PC-9 (cell line): ENCODE measurements at regions of chr17 and their contacts with region 1.

Region 1: DNA sequence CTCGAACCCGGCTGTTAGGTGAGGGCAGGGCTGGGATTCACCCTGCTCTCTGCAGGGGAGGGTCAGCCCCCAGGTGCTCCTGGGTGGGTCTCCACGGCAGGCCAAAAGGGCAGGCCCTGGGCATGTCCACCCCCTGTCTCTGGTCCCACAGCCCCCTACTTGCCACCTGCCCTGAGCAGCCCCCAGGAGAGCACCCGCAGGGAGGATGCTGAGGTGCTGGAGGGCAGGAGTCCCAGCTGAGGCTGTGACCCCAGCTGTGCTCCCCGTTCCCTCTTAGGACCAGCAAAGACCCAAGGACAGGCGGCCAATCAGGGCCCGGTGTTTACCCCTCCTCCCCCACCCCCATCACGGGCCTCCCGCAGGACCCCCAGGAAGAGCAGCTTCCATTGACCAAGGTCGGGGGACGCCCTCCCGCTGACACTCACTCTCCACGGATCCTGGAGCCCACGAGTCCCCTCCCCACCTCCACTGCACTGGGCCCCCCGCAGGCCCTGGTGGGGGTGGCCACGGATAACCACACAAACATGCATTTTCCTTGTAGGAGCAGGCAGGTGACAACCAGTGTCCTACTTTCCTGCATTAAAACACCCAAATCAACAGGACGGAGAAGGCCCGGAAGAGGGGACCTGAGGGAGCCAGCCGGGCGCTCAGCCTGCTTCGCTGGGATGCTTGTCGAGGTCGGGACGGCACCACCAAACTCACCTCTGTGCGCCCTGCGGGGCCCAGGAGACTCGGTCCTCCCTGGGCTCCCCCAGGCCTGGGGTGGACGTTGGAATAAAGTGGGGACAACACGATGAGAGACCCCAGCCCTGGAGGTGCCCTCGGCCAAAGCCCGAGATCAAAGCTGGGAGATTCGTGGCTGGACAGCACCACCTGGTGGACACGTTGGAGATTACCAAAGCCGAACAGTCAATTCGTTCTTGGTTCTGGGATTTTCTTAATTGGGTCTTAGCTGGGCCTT is 22.5 kb upstream of the ENPP7 start:
- DNase-seq: peak in 1 of 2 experiments; percentile 46
- H3K4me3 ChIP-seq: no peak overlapping the region
- H3K27ac ChIP-seq: no peak overlapping the region
- H3K4me1 ChIP-seq: no peaks in the 10 kb centered on the region
- H3K27me3 ChIP-seq: 0 out of 2 replicates have a peak, but pooled peaks cover 9% of the 10 kb centered on the region
- CTCF ChIP-seq: peak; percentile 80

Region 2: GRCh38 chr17:79074650-79075445 is 633.4 kb before region 1 on chr17 and contains the start of gene ENGASE:
- CTCF ChIA-PET with region 1: interaction called, 11 read pairs
- POLR2A ChIA-PET with region 1: no interaction called
- intact Hi-C with region 1: no loop called
- DNase-seq: peak; percentile 77 to 95
- H3K4me3 ChIP-seq: peak within 1 kb of the TSS; percentile 69
- H3K27ac ChIP-seq: no peak within 1 kb of the TSS
- H3K4me1 ChIP-seq: peaks cover 17% of the 10 kb centered on the region
- H3K27me3 ChIP-seq: no peaks in the 10 kb centered on the region
- CTCF ChIP-seq: no peak
- total RNA-seq, gene ENGASE: 15.7 and 19.5 TPM in 2 replicates

Region 3: GRCh38 chr17:79188048-79188447 is 520.2 kb before region 1 on chr17:
- CTCF ChIA-PET with region 1: no interaction called
- POLR2A ChIA-PET with region 1: no interaction called
- intact Hi-C with region 1: loop called (anchors 5 kb)
- DNase-seq: peak in 1 of 2 experiments; percentile 22
- H3K4me3 ChIP-seq: no peak overlapping the region
- H3K27ac ChIP-seq: no peak overlapping the region
- H3K4me1 ChIP-seq: no peaks in the 10 kb centered on the region
- H3K27me3 ChIP-seq: peaks cover 80% of the 10 kb centered on the region
- CTCF ChIP-seq: peak; percentile 60

Region 4: DNA sequence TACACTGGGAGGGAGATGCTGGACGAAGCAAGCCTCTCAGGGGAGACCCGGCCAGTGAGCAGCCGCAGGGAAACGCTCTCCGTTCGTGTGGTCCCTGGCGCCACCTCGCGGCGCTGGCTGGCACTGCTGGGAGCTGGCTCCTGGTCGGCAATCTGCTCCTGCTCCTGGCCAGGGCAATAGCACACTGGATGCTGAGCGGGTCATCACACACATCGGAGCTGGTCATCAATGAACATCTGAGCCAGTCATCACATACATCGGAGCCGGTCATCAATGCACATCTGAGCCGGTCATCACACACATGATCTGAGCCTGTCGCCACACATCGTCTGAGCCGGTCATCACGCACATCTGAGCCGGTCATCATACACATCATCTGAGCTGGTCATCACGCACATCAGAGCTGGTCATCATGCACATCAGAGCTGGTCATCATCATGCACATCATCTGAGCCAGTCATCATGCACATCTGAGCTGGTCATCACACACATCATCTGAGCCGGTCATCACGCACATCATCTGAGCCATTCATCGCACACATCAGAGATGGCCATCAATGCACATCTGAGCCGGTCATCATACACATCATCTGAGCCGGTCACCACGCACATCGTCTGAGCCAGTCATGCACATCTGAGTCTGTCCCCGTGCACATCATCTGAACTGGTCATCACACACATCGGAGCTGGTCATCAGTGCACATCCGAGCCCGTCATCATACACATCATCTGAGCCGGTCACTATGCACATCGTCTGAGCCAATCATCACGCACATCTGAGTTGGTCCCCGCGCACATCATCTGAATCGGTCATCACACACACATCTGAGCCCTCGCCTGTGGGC is 314.6 kb before region 1 on chr17:
- CTCF ChIA-PET with region 1: interaction called, 3 read pairs
- POLR2A ChIA-PET with region 1: no interaction called
- intact Hi-C with region 1: loop called (anchors 5 kb)
- DNase-seq: peak in 1 of 2 experiments; percentile 74
- H3K4me3 ChIP-seq: no peak overlapping the region
- H3K27ac ChIP-seq: no peak overlapping the region
- H3K4me1 ChIP-seq: no peaks in the 10 kb centered on the region
- H3K27me3 ChIP-seq: peaks cover 60% of the 10 kb centered on the region
- CTCF ChIP-seq: peak; percentile 79